Right ventricle myocardium inferior (tissue), 1 donor: ENCODE measurements at regions of chr3 and their contacts with region 1.

Region 1: DNA sequence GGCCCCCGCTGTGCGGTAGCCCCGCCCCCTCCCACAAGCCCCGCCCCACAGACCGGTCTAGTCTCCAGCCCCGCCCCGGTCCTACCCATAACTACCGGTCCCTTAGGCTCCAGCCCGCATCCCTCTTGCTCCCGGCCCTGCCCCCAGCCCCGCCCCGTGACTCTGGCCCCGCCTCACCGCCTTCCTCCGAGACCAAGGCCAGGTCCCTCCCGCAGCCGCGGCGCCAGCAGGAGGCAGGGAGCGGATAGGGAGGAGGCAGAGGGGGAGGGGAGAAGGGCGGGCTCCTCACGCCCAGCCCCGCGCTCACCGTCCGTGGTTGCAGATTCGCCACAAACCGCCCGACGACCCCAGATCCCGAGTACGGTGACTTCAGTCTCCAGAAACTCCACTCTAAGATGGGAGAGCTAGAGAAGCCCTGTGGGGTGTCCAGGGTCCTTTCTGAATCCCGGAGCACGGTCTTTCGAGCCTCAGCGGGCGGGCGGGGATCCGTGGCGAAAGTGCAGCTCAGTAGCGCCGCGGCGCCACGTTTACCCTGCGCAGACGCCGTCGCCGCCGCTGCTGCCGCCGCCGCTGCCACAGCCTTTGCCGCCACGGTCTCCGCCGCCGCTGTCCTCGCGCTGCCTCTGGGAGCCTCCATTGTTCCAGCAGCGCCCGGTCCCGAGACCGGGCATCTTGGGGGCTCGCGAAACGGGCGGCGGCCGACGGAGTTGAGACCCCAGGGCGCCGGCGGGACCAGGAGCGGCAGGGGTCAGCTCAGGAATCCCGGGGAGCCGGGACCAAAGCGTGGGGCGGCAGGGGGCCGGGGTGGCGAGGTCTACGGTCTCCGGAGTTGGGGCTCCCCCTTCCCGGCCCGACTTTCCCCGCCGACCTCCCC is at the start of gene BRPF1:
- DNase-seq: peak; percentile 100
- ATAC-seq: peak; percentile 99
- total RNA-seq, gene BRPF1: 10.9 TPM

Region 2: DNA sequence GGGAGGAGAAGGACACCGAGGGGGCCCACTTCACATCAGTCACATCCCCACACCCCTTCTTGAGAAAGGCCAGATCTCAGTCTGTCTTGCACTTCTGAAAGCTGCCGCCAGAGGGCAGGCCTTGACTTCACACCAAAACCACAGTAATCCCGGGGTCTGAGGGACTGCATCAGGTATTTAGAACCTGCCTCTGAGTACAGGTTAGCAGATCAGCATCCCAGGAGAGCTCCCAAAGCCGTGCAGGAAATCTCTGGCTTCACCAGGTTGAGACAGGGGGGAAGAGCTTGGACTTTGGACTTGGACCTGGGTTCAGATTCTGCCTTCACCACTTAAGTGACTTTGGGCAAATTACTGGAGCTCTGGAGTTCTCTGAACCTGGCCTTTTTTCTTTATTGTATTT is 228.2 kb before region 1 on chr3:
- intact Hi-C with region 1: loop called (anchors 5 kb)
- DNase-seq: peak; percentile 80
- ATAC-seq: no peak

Region 3: DNA sequence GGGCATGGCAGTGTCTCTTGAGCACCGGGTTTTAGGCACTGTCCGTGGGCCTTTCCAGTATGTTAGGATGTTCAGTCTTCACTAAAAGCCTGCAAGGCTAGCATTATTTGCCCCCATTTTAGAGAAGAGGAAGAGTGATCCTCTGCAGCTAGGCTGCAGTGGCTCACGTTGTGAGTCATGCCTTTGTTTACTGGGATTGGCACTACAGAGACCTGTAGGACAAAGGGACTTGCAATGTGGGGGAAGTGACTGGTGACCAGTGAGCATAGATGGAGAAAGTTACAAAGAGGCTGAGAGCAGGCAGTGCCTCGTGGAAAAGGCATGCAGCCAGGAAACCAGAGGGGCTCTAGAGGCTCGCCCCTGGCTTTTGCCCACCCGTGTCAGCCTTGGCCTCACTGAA is 54.7 kb before region 1 on chr3:
- intact Hi-C with region 1: no loop called
- DNase-seq: no peak
- ATAC-seq: no peak

Region 4: DNA sequence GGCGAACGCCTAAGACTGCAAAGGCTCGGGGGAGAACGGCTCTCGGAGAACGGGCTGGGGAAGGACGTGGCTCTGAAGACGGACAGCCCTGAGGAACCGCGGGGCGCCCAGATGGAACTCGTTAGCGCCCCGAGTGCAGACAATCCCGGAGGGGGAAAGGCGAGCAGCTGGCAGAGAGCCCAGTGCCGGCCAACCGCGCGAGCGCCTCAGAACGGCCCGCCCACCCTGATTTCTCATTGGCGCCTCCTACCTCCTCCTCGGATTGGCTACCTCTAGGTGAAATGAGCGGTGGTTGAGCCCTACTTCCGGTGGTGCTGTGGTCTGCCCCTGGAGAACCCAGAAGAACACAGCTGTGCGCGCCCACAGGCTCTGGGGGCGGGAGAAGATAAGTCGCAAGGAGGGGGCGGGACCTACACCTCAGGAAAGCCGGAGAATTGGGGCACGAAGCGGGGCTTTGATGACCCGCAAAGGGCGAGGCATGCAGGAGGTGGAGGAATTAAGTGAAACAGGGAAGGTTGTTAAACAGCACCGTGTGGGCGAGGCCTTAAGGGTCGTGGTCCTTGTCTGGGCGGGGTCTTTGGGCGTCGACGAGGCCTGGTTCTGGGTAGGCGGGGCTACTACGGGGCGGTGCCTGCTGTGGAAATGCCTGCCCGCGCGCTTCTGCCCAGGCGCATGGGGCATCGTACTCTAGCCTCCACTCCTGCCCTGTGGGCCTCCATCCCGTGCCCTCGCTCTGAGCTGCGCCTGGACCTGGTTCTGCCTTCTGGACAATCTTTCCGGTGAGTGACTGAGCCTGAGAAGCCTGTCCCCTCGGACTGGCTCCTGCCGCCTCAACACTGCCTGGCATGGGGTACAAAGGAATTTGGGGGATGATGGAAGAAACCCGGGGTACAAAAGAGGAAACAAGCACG is 18.5 kb after region 1 on chr3 and contains the start of gene OGG1:
- intact Hi-C with region 1: loop called (anchors 2 kb)
- DNase-seq: peak; percentile 98
- ATAC-seq: peak; percentile 98
- total RNA-seq, gene OGG1: 10.5 TPM

Region 5: DNA sequence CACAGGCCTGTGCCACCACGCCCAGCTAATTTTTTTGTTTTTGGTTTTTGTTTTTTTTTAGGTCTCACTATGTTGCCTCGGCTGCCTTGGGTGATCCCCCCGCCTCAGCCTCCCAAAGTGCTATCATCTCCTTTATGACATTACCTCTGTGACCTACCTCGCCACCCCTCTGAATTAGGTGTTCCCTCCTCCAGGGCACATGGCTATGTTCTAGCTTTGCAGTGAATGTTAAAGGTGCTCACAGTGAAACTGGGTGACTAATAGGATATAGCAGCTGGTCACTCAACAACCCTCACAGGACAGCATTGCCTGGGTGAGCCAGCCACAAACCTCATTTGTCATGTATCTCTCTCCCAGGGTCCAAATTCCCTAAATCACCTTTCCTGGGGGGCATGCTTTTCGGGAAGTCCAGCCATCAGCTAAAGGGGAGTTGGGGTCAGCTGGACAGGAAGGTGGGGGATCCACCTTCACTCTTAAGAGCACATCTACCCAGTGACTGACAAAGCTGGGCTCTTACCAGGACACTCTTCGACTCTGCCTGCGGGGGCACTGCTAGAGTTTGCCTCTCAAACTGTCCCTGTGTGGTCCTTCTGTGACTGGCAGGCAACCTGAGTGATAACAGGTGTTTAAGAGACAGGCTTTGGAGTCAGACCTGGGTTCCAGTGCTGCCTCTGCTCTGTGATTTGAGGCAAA is 77.0 kb after region 1 on chr3:
- intact Hi-C with region 1: no loop called
- DNase-seq: no peak
- ATAC-seq: no peak